ENCODE measurements at regions of chr6 and their contacts with region 1.

Region 1: GRCh38 chr6:2999618-3000557 is at the start of gene NQO2:
- DNase-seq: peak; percentile 96
- total RNA-seq, gene NQO2: 27.7 to 42.4 TPM

Region 2: GRCh38 chr6:3023663-3024483 is 24.0 kb after region 1 on chr6:
- intact Hi-C with region 1: loop called in 1 of 2 experiments (anchors 2 kb)
- DNase-seq: peak; percentile 98

Region 3: GRCh38 chr6:3052481-3053230 is 52.8 kb after region 1 on chr6:
- intact Hi-C with region 1: loop called (anchors 2 kb)
- DNase-seq: no peak

Region 4: GRCh38 chr6:3848925-3849605 is 849.2 kb after region 1 on chr6 and contains the start of gene FAM50B:
- intact Hi-C with region 1: no loop called
- DNase-seq: peak; percentile 98
- total RNA-seq, gene FAM50B: 4.8 to 7.5 TPM

Measured in posterior vena cava (tissue), 2 donors.